ENCODE measurements at regions of chr10 and their contacts with region 1.

Region 1: GRCh38 chr10:21516242-21517131 is 9.0 kb downstream of the SKIDA1 start:
- DNase-seq: peak; percentile 45
- H3K4me3 Mint-ChIP-seq: peak overlapping the region; percentile 79
- H3K27ac Mint-ChIP-seq: no peak overlapping the region
- H3K4me1 Mint-ChIP-seq: peaks cover 47% of the 10 kb centered on the region
- H3K27me3 Mint-ChIP-seq: peaks cover 79% of the 10 kb centered on the region

Region 2: GRCh38 chr10:21349912-21350286 is 166.6 kb before region 1 on chr10:
- intact Hi-C with region 1: no loop called
- DNase-seq: no peak
- H3K4me3 Mint-ChIP-seq: no peak overlapping the region
- H3K27ac Mint-ChIP-seq: no peak overlapping the region
- H3K4me1 Mint-ChIP-seq: no peaks in the 10 kb centered on the region
- H3K27me3 Mint-ChIP-seq: no peaks in the 10 kb centered on the region

Region 3: DNA sequence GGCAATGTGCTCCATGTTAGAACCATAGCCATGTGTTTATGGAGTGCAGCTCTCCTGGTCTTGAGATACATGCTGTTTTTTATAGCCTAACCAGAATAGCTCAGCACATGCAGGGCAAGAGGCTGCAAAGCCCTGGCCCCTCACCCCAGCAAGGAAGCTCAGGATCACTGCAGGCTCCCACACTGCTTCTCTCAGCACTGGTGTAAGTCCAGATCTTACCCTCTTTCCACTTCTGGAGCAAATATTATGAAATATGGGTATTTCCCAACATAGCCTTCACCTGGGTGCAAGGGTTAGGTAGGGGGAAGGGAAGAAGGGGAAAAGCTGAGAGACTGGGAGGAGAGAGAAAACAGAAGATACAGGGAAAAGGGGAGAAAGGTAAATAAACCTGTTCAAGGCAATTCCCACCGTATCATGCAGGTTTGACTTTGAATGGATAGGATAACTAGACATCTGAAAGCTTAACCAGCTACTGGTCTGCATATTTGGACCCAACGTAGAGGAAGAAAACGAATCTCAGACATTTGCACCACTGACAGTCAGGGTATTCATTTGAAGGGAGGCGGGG is 10.7 kb before region 1 on chr10:
- intact Hi-C with region 1: no loop called
- DNase-seq: no peak
- H3K4me3 Mint-ChIP-seq: no peak overlapping the region
- H3K27ac Mint-ChIP-seq: no peak overlapping the region
- H3K4me1 Mint-ChIP-seq: no peaks in the 10 kb centered on the region
- H3K27me3 Mint-ChIP-seq: peaks cover 60% of the 10 kb centered on the region

Region 4: DNA sequence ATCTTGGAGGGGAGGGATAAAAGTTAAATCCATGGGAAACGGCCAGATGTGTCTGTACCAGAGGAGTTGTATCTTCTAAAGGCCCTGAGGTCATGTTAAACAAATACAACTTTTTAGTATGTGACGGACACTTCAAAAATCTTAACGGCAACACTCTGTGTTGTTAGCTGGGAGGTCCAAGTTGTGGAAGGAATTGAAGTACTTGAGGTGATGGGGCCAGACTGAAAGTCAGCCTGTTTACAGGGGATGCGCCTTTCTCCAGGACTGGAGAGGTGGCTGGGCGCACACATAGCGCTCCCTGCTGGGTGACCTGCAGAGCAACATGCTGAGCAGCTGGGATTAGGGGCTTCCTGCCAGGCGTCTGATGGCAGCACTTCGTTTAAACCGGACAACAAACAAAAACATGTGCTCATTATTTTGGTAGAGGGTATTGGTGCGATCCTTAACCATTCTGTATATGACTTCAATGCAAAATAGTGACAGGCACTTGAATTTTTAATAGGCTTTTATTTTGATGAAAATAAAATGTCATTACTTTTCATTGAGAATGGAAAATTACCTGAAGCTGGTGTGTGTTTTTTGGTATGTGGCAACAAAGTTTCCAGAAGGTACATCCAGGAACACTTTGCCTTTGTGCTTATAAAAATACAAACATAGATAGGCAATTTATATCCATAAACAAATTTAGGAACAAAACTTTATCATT is 215.7 kb after region 1 on chr10:
- intact Hi-C with region 1: loop called (anchors 5 kb)
- DNase-seq: peak; percentile 19
- H3K4me3 Mint-ChIP-seq: no peak overlapping the region
- H3K27ac Mint-ChIP-seq: no peak overlapping the region
- H3K4me1 Mint-ChIP-seq: peaks cover 29% of the 10 kb centered on the region
- H3K27me3 Mint-ChIP-seq: no peaks in the 10 kb centered on the region

Region 5: GRCh38 chr10:21953585-21954057 is 437.1 kb after region 1 on chr10:
- intact Hi-C with region 1: loop called (anchors 1 kb)
- DNase-seq: no peak
- H3K4me3 Mint-ChIP-seq: no peak overlapping the region
- H3K27ac Mint-ChIP-seq: no peak overlapping the region
- H3K4me1 Mint-ChIP-seq: peaks cover 6% of the 10 kb centered on the region
- H3K27me3 Mint-ChIP-seq: peaks cover 2% of the 10 kb centered on the region

Region 6: GRCh38 chr10:22245567-22245966 is 729.1 kb after region 1 on chr10:
- intact Hi-C with region 1: loop called (anchors 5 kb)
- DNase-seq: no peak
- H3K4me3 Mint-ChIP-seq: no peak overlapping the region
- H3K27ac Mint-ChIP-seq: no peak overlapping the region
- H3K4me1 Mint-ChIP-seq: peaks cover 38% of the 10 kb centered on the region
- H3K27me3 Mint-ChIP-seq: no peaks in the 10 kb centered on the region

Region 7: GRCh38 chr10:22481687-22482541 is 965.4 kb after region 1 on chr10:
- intact Hi-C with region 1: loop called (anchors 5 kb)
- DNase-seq: no peak
- H3K4me3 Mint-ChIP-seq: no peak overlapping the region
- H3K27ac Mint-ChIP-seq: no peak overlapping the region
- H3K4me1 Mint-ChIP-seq: peaks cover 22% of the 10 kb centered on the region
- H3K27me3 Mint-ChIP-seq: peaks cover 23% of the 10 kb centered on the region

Region 8: DNA sequence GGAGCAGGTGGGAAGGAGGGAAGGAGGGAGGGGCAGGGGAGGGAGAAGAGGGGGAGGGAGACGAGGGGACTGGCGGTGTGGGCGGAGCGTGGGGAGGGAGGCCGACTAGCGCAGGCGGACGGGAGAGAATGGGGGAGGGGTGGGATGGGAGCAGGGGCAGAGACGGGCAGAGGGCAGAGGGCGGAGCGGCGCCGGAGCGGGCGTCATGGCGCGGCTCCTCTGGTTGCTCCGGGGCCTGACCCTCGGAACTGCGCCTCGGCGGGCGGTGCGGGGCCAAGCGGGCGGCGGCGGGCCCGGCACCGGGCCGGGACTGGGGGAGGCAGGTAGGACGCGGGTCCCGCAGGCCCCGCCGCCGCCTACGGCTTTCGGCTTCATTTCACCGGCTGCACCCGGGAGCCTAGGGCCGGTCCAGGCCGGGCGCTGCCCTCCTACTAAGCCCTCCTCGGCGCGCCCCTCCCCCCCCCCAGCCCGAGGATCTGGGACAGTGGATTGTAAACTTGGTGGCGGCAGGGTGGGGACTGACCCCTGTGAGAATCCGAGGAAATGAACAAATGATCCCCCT is 1579.0 kb after region 1 on chr10 and contains the start of gene MSRB2:
- intact Hi-C with region 1: loop called (anchors 5 kb)
- DNase-seq: peak; percentile 64
- H3K4me3 Mint-ChIP-seq: peak within 1 kb of the TSS; percentile 92
- H3K27ac Mint-ChIP-seq: peak within 1 kb of the TSS; percentile 91
- H3K4me1 Mint-ChIP-seq: peaks cover 36% of the 10 kb centered on the region
- H3K27me3 Mint-ChIP-seq: peaks cover 6% of the 10 kb centered on the region
- total RNA-seq, gene MSRB2: 3.0 and 4.0 TPM in 2 replicates